Naive thymus-derived CD4-positive, alpha-beta T cell (primary cell): ENCODE measurements at regions of chr11 and their contacts with region 1.

Region 1: GRCh38 chr11:128725630-128726319 is 31.9 kb downstream of the FLI1 start:
- DNase-seq: peak; percentile 32 to 90 (median 86)
- ATAC-seq: peak; percentile 76
- H3K4me3 ChIP-seq: peak overlapping the region; percentile 62
- H3K4me3 Mint-ChIP-seq: peak overlapping the region; percentile 70 to 96 (median 86)
- H3K27ac ChIP-seq: peak overlapping the region; percentile 65
- H3K27ac Mint-ChIP-seq: peak overlapping the region; percentile 71 to 98 (median 92)
- H3K4me1 ChIP-seq: peaks cover 96 to 99% of the 10 kb centered on the region in 2 donors
- H3K4me1 Mint-ChIP-seq: peaks cover 90 to 100% (median 97%) of the 10 kb centered on the region in 7 donors
- H3K27me3 ChIP-seq: no peaks in the 10 kb centered on the region
- H3K27me3 Mint-ChIP-seq: no peaks in the 10 kb centered on the region

Region 2: DNA sequence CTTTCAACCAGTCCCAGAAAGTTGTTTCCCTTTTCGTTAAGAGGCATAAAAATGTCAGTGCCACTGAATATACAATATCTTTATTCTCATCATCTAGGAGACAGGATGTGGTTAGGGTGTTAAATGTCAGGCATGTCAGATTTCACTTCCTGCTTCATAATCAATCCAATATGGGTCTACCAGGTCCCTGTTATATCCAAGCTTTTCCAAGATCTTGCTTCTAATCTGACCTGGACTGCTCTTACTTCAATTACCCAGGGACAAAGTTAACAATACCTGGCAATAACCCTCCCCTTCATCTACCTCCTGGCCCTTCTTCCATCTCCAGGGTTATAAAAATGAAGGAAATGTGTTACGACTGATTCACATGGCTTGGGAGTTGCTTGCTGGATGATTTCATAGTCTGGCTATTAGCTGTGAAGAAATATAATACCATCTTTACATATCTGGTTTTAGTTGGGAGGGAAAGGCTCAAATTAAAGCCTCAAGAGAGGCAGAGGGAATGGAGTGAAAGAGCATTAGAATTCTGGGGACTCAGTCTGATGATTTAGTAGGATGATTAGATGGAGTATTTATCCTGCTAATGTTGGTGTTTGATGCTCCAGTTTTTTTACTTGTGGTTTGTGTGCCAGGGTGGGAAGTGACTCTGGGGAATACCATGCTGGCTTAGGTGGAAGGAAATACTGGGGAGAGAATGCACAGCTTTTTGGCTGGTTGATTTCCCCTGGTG is 672.7 kb before region 1 on chr11:
- CTCF ChIA-PET with region 1: no interaction called
- POLR2A ChIA-PET with region 1: no interaction called
- intact Hi-C with region 1: loop called in 1 of 2 experiments (anchors 5 kb)
- DNase-seq: peak in 7 of 9 donors; percentile 21 to 66 (median 61)
- ATAC-seq: peak; percentile 60
- H3K4me3 ChIP-seq: peak overlapping the region; percentile 28
- H3K4me3 Mint-ChIP-seq: peak overlapping the region; percentile 54 to 90 (median 80)
- H3K27ac ChIP-seq: peak overlapping the region; percentile 68
- H3K27ac Mint-ChIP-seq: peak overlapping the region; percentile 82 to 95 (median 90)
- H3K4me1 ChIP-seq: peaks cover 63 to 64% of the 10 kb centered on the region in 2 donors
- H3K4me1 Mint-ChIP-seq: peaks cover 40 to 81% (median 78%) of the 10 kb centered on the region in 7 donors
- H3K27me3 ChIP-seq: no peaks in the 10 kb centered on the region
- H3K27me3 Mint-ChIP-seq: no peaks in the 10 kb centered on the region

Region 3: GRCh38 chr11:128648711-128649110 is 77.1 kb before region 1 on chr11:
- CTCF ChIA-PET with region 1: no interaction called
- POLR2A ChIA-PET with region 1: no interaction called
- intact Hi-C with region 1: no loop called
- DNase-seq: no peak
- ATAC-seq: no peak
- H3K4me3 ChIP-seq: no peak overlapping the region
- H3K4me3 Mint-ChIP-seq: no peak overlapping the region
- H3K27ac ChIP-seq: no peak overlapping the region
- H3K27ac Mint-ChIP-seq: no peak overlapping the region
- H3K4me1 ChIP-seq: no peaks in the 10 kb centered on the region
- H3K4me1 Mint-ChIP-seq: peaks cover 0 to 8% (median 5%) of the 10 kb centered on the region in 7 donors
- H3K27me3 ChIP-seq: no peaks in the 10 kb centered on the region
- H3K27me3 Mint-ChIP-seq: peaks cover 0 to 24% (median 0%) of the 10 kb centered on the region in 5 donors

Region 4: GRCh38 chr11:128709402-128709801 is 16.4 kb before region 1 on chr11:
- CTCF ChIA-PET with region 1: interaction called, 3 read pairs
- POLR2A ChIA-PET with region 1: interaction called, 24 read pairs
- intact Hi-C with region 1: loop called in 1 of 2 experiments (anchors 1 kb)
- DNase-seq: no peak
- ATAC-seq: no peak
- H3K4me3 ChIP-seq: no peak overlapping the region
- H3K4me3 Mint-ChIP-seq: peak overlapping the region in 6 of 10 donors; percentile 0 to 47 (median 26)
- H3K27ac ChIP-seq: no peak overlapping the region
- H3K27ac Mint-ChIP-seq: peak overlapping the region in 7 of 9 donors; percentile 33 to 80 (median 63)
- H3K4me1 ChIP-seq: peaks cover 76 to 77% of the 10 kb centered on the region in 2 donors
- H3K4me1 Mint-ChIP-seq: peaks cover 75 to 100% (median 98%) of the 10 kb centered on the region in 7 donors
- H3K27me3 ChIP-seq: no peaks in the 10 kb centered on the region
- H3K27me3 Mint-ChIP-seq: no peaks in the 10 kb centered on the region

Region 5: DNA sequence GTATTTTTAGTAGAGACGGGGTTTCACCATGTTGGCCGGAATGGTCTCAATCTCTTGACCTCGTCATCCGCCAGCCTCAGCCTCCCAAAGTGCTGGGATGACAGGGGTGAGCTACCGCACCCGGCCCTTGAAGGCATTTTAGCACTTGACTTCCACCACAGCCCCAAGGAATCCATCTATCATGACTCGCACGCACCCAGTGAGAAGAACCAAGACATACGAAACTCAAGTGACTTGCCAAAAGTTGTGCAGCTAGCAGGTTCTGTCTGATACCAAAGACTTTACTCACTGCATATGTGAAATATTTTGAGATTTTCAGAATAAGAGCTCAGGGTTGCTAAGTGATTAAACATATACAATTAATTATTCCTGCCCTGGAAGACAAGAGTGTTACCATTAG is 10.9 kb before region 1 on chr11:
- CTCF ChIA-PET with region 1: no interaction called
- POLR2A ChIA-PET with region 1: interaction called, 46 read pairs
- intact Hi-C with region 1: loop called (anchors 1 kb)
- DNase-seq: no peak
- ATAC-seq: no peak
- H3K4me3 ChIP-seq: no peak overlapping the region
- H3K4me3 Mint-ChIP-seq: peak overlapping the region in 9 of 10 donors; percentile 2 to 92 (median 42)
- H3K27ac ChIP-seq: peak overlapping the region; percentile 73
- H3K27ac Mint-ChIP-seq: peak overlapping the region; percentile 61 to 99 (median 93)
- H3K4me1 ChIP-seq: peaks cover 77 to 90% of the 10 kb centered on the region in 2 donors
- H3K4me1 Mint-ChIP-seq: peaks cover 87 to 100% (median 98%) of the 10 kb centered on the region in 7 donors
- H3K27me3 ChIP-seq: no peaks in the 10 kb centered on the region
- H3K27me3 Mint-ChIP-seq: no peaks in the 10 kb centered on the region

Region 6: GRCh38 chr11:128738942-128739341 is 13.2 kb after region 1 on chr11:
- CTCF ChIA-PET with region 1: interaction called, 19 read pairs
- POLR2A ChIA-PET with region 1: interaction called, 51 read pairs
- intact Hi-C with region 1: loop called in 1 of 2 experiments (anchors 1 kb)
- DNase-seq: peak in 6 of 9 donors; percentile 41 to 58 (median 50)
- ATAC-seq: peak; percentile 70
- H3K4me3 ChIP-seq: peak overlapping the region; percentile 2
- H3K4me3 Mint-ChIP-seq: peak overlapping the region; percentile 68 to 93 (median 82)
- H3K27ac ChIP-seq: peak overlapping the region; percentile 52
- H3K27ac Mint-ChIP-seq: peak overlapping the region; percentile 64 to 98 (median 95)
- H3K4me1 ChIP-seq: peaks cover 66 to 79% of the 10 kb centered on the region in 2 donors
- H3K4me1 Mint-ChIP-seq: peaks cover 71 to 95% (median 93%) of the 10 kb centered on the region in 7 donors
- H3K27me3 ChIP-seq: no peaks in the 10 kb centered on the region
- H3K27me3 Mint-ChIP-seq: no peaks in the 10 kb centered on the region